A673 (cell line): ENCODE measurements at regions of chrX and their contacts with region 1.

Region 1: DNA sequence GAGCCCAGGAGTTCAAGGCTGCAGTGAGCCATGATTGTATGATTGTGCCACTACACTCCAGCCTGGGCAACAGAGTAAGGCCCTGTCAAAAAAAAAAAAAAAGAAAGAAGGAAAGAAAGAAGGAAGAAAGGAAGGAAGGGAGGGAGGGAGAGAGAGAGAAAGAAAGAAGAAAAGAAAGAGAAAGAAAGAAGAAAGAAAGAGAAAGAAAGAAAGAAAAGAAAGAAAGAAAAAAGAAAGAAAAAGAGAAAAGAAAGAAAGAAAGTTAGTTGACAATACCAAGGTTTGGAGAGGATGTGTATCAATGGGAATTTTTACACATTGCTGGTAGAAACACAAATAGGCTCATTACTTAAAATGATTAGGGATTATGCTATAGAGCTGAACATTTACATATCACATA is 19.8 kb downstream of the RADX start:
- DNase-seq: no peak
- H3K4me3 ChIP-seq: no peak overlapping the region
- H3K27ac ChIP-seq: no peak overlapping the region
- H3K4me1 ChIP-seq: no peaks in the 10 kb centered on the region
- H3K27me3 ChIP-seq: no peaks in the 10 kb centered on the region
- CTCF ChIP-seq: no peak

Region 2: GRCh38 chrX:106467422-106467821 is 164.2 kb before region 1 on chrX:
- CTCF ChIA-PET with region 1: no interaction called
- POLR2A ChIA-PET with region 1: no interaction called
- intact Hi-C with region 1: no loop called
- DNase-seq: no peak
- H3K4me3 ChIP-seq: no peak overlapping the region
- H3K27ac ChIP-seq: no peak overlapping the region
- H3K4me1 ChIP-seq: no peaks in the 10 kb centered on the region
- H3K27me3 ChIP-seq: no peaks in the 10 kb centered on the region
- CTCF ChIP-seq: no peak

Region 3: DNA sequence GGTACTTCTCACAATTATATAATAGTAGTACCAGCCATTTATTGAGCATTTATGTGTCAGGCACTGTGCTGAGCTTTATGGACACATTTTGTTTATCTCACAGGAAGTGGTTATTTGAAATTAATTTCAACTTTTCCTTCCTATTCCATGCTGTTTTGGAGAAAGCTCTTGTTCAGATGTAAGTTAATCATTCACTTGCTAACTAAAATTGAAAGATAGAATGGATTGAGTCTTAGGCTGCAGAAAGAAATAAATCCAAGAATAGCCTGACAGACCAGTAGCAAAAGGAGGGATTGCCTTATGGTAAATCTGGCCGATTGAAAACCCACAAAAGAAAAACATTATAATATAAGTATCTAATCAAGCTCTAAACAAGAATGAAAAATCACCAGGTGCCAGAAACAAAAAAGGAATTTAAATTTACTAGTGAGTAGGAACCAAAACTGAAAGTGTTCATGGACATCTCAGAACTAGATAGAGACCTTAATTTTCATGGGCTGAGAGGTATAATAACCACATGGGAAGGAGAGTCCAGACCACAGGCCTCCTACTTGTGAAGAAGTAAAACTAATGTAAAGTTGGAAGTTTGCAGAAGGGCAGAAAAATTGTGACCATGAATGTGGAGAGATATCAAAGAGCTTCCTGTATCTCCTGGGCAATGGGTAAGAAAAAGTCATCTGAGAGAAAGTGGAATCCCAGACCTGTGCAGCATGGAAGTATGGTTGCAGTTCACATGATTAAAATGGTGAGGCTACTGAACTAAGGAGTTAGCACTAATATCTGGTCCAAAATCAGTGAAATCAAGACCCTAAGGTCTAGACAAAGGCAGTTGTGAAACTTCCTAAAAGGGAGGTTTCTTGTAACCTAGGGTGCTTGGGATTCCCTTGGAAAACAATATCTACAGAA is 18.2 kb after region 1 on chrX:
- CTCF ChIA-PET with region 1: no interaction called
- POLR2A ChIA-PET with region 1: interaction called, 12 read pairs
- intact Hi-C with region 1: no loop called
- DNase-seq: no peak
- H3K4me3 ChIP-seq: no peak overlapping the region
- H3K27ac ChIP-seq: no peak overlapping the region
- H3K4me1 ChIP-seq: no peaks in the 10 kb centered on the region
- H3K27me3 ChIP-seq: no peaks in the 10 kb centered on the region
- CTCF ChIP-seq: no peak

Region 4: GRCh38 chrX:106917830-106918500 is 286.4 kb after region 1 on chrX:
- CTCF ChIA-PET with region 1: no interaction called
- POLR2A ChIA-PET with region 1: no interaction called
- intact Hi-C with region 1: no loop called
- DNase-seq: peak; percentile 78
- H3K4me3 ChIP-seq: no peak overlapping the region
- H3K27ac ChIP-seq: no peak overlapping the region
- H3K4me1 ChIP-seq: peaks cover 13% of the 10 kb centered on the region
- H3K27me3 ChIP-seq: no peaks in the 10 kb centered on the region
- CTCF ChIP-seq: no peak